Activated T-helper 1 cell treated with anti-CD3 and anti-CD28 coated beads, Interleukin-12 subunit alpha, Interleukin-12 subunit beta, Interleukin-2, Interleukin-4 antibody, amounts not matched to agents 30 ng/mL and 10 ng/mL and 1 ng/mL, durations not matched to agents 14 hours and 24 hours and 36 hours (primary cell): ENCODE measurements at regions of chr2 and their contacts with region 1.

Region 1: GRCh38 chr2:100984892-100985379 is 17.2 kb upstream of the RPL31 start:
- DNase-seq: peak; percentile 49
- H3K4me3 Mint-ChIP-seq: no peak overlapping the region
- H3K27ac Mint-ChIP-seq: no peak overlapping the region
- H3K4me1 Mint-ChIP-seq: no peaks in the 10 kb centered on the region
- H3K27me3 Mint-ChIP-seq: no peaks in the 10 kb centered on the region

Region 2: DNA sequence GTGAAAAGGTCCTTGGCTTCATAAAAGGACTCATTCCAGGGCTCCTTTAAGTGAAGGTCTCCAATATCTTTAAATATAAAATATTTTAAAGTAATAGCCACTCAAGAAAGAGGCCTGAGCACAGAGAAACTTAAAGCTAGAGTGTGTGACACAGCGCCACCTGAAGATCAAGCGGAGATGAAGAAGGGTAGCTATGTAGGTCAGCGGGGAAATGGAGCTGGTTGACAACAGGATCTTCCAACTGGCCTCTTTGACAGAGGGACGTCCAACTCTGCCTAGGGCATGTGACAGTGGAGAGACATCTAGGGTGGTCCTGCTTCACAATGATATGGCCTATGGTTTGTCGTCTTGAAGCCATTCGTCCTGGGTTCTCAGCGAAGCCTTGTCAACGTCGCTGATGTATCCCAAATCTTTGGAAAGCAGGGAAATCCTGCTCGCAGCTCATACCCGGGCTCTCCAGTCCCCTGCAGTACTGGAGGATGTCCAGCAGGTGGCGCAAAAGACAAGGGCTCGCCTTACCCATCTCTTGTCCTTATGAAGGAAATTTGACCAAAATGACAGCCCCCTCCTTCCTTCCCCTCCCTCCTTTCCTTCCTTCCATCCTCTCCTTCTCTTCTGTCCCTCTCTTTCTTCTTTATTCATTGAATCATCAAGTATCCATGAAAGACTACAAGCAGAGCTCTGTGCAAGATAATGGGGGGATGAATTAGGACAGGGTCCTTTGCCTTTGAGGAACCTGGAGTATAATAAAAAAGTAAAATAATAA is 722.2 kb before region 1 on chr2:
- intact Hi-C with region 1: loop called (anchors 10 kb)
- DNase-seq: peak; percentile 22
- H3K4me3 Mint-ChIP-seq: no peak overlapping the region
- H3K27ac Mint-ChIP-seq: no peak overlapping the region
- H3K4me1 Mint-ChIP-seq: no peaks in the 10 kb centered on the region
- H3K27me3 Mint-ChIP-seq: peaks cover 2% of the 10 kb centered on the region

Region 3: DNA sequence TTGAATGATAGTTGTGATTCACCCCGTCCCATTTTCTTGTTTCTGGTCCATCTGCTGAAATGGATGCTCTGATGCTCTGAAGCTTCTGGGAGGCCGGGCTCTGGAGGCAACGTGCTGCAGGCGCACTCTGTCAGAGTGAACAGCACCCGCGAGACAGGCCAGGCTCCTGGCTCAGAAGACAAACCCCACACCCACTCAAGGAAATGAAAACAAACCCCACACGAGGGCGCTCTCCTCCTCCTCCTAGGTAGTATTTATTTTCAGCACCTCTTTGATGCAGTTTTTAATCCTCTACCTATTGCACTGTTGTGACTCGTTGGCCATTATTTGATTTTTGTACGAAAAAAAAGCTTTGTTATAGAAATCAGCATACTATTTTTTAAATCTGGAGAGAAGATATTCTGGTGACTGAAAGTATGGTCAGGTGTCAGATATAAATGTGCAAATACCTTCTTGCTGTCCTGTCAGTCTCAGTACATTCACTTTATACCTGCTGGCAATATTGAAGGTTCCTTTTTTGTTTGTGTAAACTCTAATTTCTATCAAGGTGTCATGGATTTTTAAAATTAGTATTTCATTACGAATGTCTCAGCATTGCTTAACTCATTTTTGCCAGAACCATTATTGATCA is 557.2 kb before region 1 on chr2:
- intact Hi-C with region 1: loop called (anchors 10 kb)
- DNase-seq: peak; percentile 48
- H3K4me3 Mint-ChIP-seq: no peak overlapping the region
- H3K27ac Mint-ChIP-seq: no peak overlapping the region
- H3K4me1 Mint-ChIP-seq: peaks cover 5% of the 10 kb centered on the region
- H3K27me3 Mint-ChIP-seq: peaks cover 26% of the 10 kb centered on the region

Region 4: GRCh38 chr2:100606726-100607343 is 378.1 kb before region 1 on chr2:
- intact Hi-C with region 1: loop called (anchors 1 kb)
- DNase-seq: no peak
- H3K4me3 Mint-ChIP-seq: no peak overlapping the region
- H3K27ac Mint-ChIP-seq: no peak overlapping the region
- H3K4me1 Mint-ChIP-seq: peaks cover 7% of the 10 kb centered on the region
- H3K27me3 Mint-ChIP-seq: peaks cover 4% of the 10 kb centered on the region

Region 5: DNA sequence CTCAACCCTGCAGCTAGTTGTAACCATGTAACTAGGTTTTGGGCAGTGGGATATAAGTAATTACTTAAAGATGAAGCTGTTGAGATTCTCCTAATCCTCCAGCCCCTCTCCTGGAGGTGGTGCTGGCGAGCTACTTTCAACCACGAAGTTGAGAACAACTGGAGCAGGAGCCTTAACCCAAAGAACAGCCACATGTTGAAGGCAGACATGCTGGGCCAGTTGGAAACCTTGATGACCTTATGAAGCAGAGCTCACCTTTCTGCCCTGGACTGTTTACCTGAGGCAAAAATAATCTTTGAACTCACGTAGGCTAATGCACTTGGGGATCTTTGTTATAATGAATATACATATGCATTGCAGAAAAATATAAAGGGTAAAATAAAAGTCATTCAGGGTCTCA is 254.6 kb before region 1 on chr2:
- intact Hi-C with region 1: loop called (anchors 1 kb)
- DNase-seq: no peak
- H3K4me3 Mint-ChIP-seq: no peak overlapping the region
- H3K27ac Mint-ChIP-seq: no peak overlapping the region
- H3K4me1 Mint-ChIP-seq: no peaks in the 10 kb centered on the region
- H3K27me3 Mint-ChIP-seq: peaks cover 4% of the 10 kb centered on the region

Region 6: DNA sequence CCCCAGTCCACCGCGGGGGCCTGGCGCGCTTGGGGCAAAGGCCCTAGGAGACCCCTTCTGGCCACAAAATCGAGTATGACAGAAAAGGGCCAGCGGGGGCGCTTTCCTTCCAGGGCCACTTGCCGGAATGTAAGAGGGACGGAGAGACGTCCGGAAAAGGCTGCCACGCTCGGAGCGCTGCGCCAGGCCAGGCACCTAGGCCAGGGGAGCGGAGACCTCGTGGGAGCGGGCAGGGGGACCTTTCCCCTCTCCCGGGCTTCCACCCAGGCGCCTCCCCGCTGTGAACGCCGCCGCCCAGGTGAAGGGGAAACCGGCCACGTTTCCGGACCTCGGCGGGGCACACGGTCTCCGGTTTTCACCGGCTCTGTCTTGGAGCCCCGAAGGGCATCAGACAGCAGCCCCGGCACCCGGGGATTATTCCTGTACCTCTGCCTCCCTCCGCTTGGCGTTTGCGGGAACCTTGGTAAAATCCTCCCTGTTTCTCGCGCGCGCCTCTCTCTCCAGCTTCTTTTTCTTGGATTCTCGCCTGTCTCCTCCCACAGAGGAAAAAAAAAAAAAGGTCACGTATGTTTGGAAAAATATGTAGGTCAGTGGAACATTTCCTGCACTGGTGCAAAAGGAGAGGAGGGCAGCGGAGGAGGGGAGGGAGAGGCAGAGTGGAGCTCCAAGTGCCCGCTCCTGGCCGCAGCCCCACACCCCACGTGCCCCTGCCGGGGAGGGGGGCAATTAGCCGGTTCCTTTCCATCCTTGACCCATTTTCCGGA is 166.1 kb before region 1 on chr2:
- intact Hi-C with region 1: loop called (anchors 10 kb)
- DNase-seq: no peak
- H3K4me3 Mint-ChIP-seq: peak overlapping the region; percentile 77
- H3K27ac Mint-ChIP-seq: no peak overlapping the region
- H3K4me1 Mint-ChIP-seq: peaks cover 26% of the 10 kb centered on the region
- H3K27me3 Mint-ChIP-seq: peaks cover 47% of the 10 kb centered on the region

Region 7: DNA sequence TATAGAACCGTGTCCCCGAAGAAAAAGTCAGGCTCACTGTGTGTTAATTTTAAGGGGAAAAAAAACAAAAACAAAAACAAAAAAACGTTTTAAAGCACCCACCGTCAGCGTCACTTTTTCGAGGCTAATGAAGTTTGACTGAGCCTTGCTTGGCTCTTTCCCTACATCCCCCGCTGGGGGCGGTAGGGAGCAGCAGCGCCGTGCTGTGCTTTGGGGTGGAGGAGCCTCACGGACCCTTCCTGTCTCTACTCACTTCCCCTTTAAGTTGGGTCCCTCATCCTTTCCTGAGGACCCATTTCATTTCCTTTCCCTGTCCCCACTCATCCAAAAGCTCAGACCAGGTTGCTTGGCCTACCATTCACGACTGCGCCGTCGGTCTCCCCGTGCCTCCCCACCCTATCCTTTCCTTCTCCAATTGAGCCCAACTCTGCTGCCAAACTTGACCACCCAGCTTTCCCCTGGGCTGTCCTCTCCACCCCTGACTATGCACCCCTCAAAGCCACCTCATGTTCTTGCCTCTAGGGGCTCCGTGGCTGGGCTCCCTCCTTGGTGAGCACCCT is 65.5 kb before region 1 on chr2:
- intact Hi-C with region 1: loop called (anchors 1 kb)
- DNase-seq: no peak
- H3K4me3 Mint-ChIP-seq: no peak overlapping the region
- H3K27ac Mint-ChIP-seq: no peak overlapping the region
- H3K4me1 Mint-ChIP-seq: no peaks in the 10 kb centered on the region
- H3K27me3 Mint-ChIP-seq: peaks cover 4% of the 10 kb centered on the region

Region 8: GRCh38 chr2:101001691-101002561 is 17.0 kb after region 1 on chr2 and contains the start of gene RPL31:
- intact Hi-C with region 1: no loop called
- DNase-seq: peak; percentile 95
- H3K4me3 Mint-ChIP-seq: peak within 1 kb of the TSS; percentile 100
- H3K27ac Mint-ChIP-seq: peak within 1 kb of the TSS; percentile 95
- H3K4me1 Mint-ChIP-seq: peaks cover 46% of the 10 kb centered on the region
- H3K27me3 Mint-ChIP-seq: peaks cover 6% of the 10 kb centered on the region
- total RNA-seq, gene RPL31: 1,048 and 1,092 TPM in 2 replicates

Region 9: DNA sequence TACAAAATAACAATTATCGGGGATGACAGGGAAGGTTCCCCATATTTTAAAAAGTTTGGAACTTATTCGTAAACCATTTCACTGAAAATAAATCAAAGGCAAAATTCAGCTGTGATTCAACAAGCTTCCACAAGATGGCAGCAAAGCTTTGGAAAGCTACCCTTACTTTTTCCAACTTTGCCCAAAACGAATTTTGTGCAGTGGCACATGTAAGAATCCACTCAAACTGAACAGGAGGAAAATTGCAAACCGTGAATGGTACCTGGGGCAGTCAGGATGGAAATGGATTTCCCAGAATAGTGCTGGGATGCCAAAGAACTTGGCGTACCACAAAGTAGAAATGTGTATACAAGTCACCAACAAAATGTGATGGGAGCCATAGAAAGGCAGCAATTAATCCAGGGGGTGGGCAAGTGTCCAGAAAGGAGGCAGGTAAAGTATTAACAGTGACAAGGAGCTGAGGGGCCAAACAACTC is 27.8 kb after region 1 on chr2:
- intact Hi-C with region 1: no loop called
- DNase-seq: peak; percentile 19
- H3K4me3 Mint-ChIP-seq: no peak overlapping the region
- H3K27ac Mint-ChIP-seq: peak overlapping the region; percentile 41
- H3K4me1 Mint-ChIP-seq: peaks cover 36% of the 10 kb centered on the region
- H3K27me3 Mint-ChIP-seq: no peaks in the 10 kb centered on the region